ENCODE measurements at regions of chr1 and their contacts with region 1.

Region 1: DNA sequence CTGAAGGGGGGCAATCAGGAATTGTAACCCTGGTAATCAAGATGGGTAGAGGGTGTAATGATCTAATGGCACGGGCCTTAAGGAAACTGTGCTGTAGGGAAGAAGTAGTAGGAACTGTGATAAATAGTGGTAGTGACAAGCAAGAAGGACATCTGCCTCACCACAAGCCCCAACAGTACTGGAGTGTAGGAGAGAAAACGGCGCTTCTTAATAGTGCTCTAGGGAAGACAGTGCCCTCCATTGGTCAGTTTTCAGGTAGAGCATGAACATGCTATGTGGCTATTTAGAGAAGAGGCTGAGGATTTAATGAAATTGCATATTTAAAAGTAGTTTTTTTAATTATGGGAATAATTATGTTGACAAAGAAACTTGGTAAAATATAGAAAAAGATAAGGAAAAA is 32.2 kb downstream of the SLC30A7 start:
- DNase-seq: peak; percentile 8 to 31 (median 18)
- ATAC-seq: peak; percentile 82
- H3K4me3 ChIP-seq: no peak overlapping the region
- H3K27ac ChIP-seq: no peak overlapping the region
- H3K4me1 ChIP-seq: no peaks in the 10 kb centered on the region
- H3K27me3 ChIP-seq: no peaks in the 10 kb centered on the region
- CTCF ChIP-seq: peak in 2 of 3 experiments; percentile 7 to 29; a peak in 2 of 6 replicates
- EP300 ChIP-seq: no peak
- POLR2A ChIP-seq: no peak
- RAD21 ChIP-seq: no peak; a peak in 1 of 4 replicates

Region 2: GRCh38 chr1:101136739-101137138 is 208.6 kb after region 1 on chr1:
- CTCF ChIA-PET with region 1: no interaction called
- POLR2A ChIA-PET with region 1: no interaction called
- in situ Hi-C with region 1: no loop called
- intact Hi-C with region 1: loop called (anchors 5 kb)
- DNase-seq: no peak
- ATAC-seq: peak; percentile 64
- H3K4me3 ChIP-seq: no peak overlapping the region
- H3K27ac ChIP-seq: no peak overlapping the region
- H3K4me1 ChIP-seq: peaks cover 0 to 20% of the 10 kb centered on the region in 2 experiments; a peak in 3 of 5 replicates
- H3K27me3 ChIP-seq: no peaks in the 10 kb centered on the region
- CTCF ChIP-seq: peak in 2 of 3 experiments; percentile 19 to 55; a peak in 2 of 6 replicates
- EP300 ChIP-seq: peak; percentile 5; the same call in 1 of the 2 replicates
- POLR2A ChIP-seq: no peak
- RAD21 ChIP-seq: peak; percentile 54 to 70

Measured in K562 (cell line).